ENCODE measurements at regions of chr5 and their contacts with region 1.

Region 1: DNA sequence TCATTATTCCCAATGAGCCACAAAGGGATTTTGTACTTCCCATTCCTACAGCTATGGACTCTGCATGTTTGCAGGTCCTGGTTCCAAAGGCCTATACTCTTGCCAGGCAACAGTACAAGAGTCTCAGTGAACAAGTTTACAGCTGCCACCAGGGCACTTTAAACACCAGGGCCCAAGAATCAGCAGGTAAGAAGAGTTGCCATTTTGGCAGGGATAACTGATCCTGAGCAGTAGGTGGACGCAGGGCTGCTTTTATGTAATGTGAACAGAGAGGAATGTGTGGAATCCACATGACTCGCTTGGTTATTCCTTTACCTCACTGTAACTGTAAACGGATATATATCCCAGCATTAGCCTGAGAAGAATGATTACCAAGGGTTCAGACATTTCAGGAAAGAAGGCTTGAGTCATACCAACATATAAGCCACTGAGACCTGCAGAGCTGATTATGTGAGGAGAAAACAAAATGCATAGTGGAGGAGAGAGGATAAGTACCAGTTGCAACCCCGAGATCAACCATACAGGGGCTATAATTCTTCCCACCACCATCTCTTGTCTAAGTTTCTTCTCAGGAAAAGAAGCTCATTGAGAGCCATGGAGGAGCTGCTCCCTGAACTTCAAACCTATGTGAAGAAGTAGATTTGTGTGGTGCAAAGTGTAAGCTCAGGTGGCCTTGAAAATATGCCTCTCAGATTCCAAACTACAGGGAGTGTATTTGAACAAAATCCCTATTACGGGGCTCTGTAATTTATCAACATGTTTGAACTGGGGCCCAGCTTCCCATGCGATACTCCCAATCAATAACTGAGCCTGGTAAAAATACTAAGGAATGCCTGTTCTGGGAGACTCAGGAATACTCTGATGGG is 24.6 kb downstream of the RAPGEF6 start:
- DNase-seq: no peak
- ATAC-seq: no peak
- H3K4me3 ChIP-seq: no peak overlapping the region
- H3K4me3 Mint-ChIP-seq: no peak overlapping the region
- H3K27ac ChIP-seq: no peak overlapping the region
- H3K27ac Mint-ChIP-seq: peak overlapping the region in 1 of 2 donors; percentile 25
- H3K4me1 ChIP-seq: peaks cover 6 to 16% of the 10 kb centered on the region in 2 experiments
- H3K4me1 Mint-ChIP-seq: peaks cover 59 to 73% (median 73%) of the 10 kb centered on the region in 3 donors
- H3K27me3 ChIP-seq: no peaks in the 10 kb centered on the region
- H3K27me3 Mint-ChIP-seq: no peaks in the 10 kb centered on the region

Region 2: DNA sequence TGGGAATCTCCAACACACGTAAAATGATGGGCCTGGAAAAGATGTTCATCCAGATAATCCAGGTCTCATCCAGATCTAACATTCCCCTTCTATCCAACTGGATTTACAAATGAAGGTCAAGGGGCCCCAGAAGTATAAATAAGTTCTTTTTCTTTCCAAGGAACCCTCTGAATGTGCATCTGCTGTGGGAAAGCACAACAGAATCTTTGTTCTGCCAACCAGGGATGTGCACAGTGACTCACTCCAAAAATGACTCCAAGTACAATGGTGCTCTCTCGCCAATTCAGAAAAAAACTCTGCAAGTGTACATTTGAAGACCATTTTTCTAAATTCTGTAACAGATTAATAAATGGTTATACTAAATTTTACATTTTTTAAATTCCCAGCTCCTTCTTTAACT is 12.2 kb after region 1 on chr5:
- CTCF ChIA-PET with region 1: interaction called in 1 of 2 experiments, 5 read pairs
- POLR2A ChIA-PET with region 1: interaction called in 1 of 2 experiments, 10 read pairs
- DNase-seq: no peak
- ATAC-seq: no peak
- H3K4me3 ChIP-seq: no peak overlapping the region
- H3K4me3 Mint-ChIP-seq: no peak overlapping the region
- H3K27ac ChIP-seq: no peak overlapping the region
- H3K27ac Mint-ChIP-seq: no peak overlapping the region
- H3K4me1 ChIP-seq: peaks cover 5 to 8% of the 10 kb centered on the region in 2 experiments
- H3K4me1 Mint-ChIP-seq: peaks cover 67 to 77% (median 69%) of the 10 kb centered on the region in 3 donors
- H3K27me3 ChIP-seq: no peaks in the 10 kb centered on the region
- H3K27me3 Mint-ChIP-seq: no peaks in the 10 kb centered on the region

Region 3: DNA sequence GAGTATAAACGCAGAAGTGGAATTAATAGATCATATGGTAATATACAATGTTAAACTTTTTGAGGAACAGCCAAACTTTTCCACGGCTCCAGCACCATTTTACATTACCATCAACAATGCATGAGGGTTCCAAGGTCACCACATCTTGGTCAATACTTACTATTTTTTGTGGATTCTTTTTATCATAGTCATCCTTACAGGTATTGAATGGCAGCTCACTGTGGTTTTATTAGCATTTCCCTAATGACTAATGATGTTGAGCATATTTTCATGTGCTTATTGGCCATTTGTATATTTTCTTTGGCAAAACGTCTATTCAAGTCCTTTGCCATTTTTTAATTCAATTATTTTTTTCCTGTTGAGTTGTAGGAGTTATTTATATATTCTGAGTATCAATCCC is 38.7 kb after region 1 on chr5:
- CTCF ChIA-PET with region 1: no interaction called
- POLR2A ChIA-PET with region 1: no interaction called
- DNase-seq: no peak
- ATAC-seq: no peak
- H3K4me3 ChIP-seq: no peak overlapping the region
- H3K4me3 Mint-ChIP-seq: no peak overlapping the region
- H3K27ac ChIP-seq: no peak overlapping the region
- H3K27ac Mint-ChIP-seq: no peak overlapping the region
- H3K4me1 ChIP-seq: no peaks in the 10 kb centered on the region
- H3K4me1 Mint-ChIP-seq: peaks cover 0 to 2% (median 0%) of the 10 kb centered on the region in 3 donors
- H3K27me3 ChIP-seq: no peaks in the 10 kb centered on the region
- H3K27me3 Mint-ChIP-seq: no peaks in the 10 kb centered on the region